Activated T-helper 1 cell treated with anti-CD3 and anti-CD28 coated beads, Interleukin-12 subunit alpha, Interleukin-12 subunit beta, Interleukin-2, Interleukin-4 antibody, amounts not matched to agents 30 ng/mL and 10 ng/mL and 1 ng/mL, durations not matched to agents 14 hours and 24 hours and 36 hours (primary cell): ENCODE measurements at regions of chr2 and their contacts with region 1.

Region 1: DNA sequence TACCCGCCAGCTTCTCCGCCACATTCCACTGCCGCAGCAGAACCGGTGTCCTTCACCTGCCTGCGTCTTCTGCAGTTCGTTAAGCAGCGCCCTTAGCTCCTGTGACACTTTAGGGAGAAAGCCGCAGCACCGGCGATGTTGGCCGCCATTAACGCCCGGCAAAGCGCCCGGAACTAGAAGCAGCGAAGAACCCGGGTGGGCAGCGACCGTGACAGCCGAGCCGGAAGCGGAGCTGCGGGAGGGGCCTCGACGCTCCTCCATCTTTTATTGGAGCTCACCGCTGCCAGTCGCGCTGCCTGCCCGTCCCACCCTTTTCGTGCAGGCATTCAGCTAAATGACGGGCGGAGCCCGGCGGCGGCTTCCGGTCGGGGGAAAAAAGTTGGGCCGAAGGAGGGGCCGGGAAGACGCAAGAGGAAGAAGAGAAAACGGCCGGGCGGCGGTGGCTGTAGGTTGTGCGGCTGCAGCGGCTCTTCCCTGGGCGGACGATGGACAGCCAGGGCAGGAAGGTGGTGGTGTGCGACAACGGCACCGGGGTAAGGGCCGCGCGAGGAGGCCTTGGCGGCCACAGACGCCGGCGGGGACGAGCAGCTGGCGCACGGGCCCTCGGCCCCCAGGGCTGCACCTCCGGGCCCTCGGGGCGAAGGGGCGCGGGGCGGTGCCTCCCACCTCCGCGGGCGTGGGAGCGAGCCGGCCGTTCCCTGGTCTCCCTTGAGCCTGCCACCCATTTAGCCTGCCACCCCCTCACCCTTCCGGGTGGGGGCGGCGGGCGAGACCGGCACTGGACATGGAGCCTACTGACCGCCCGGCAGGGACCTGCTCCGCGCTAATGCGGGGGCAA is at the start of gene ACTR2:
- DNase-seq: peak; percentile 95
- H3K4me3 Mint-ChIP-seq: peak within 1 kb of the TSS; percentile 98
- H3K27ac Mint-ChIP-seq: peak within 1 kb of the TSS; percentile 99
- H3K4me1 Mint-ChIP-seq: peaks cover 36% of the 10 kb centered on the region
- H3K27me3 Mint-ChIP-seq: no peaks in the 10 kb centered on the region
- total RNA-seq, gene ACTR2: 285 and 295 TPM in 2 replicates

Region 2: GRCh38 chr2:65129826-65130663 is 97.6 kb before region 1 on chr2 and contains the start of gene RAB1A:
- intact Hi-C with region 1: loop called (anchors 1 kb)
- DNase-seq: peak; percentile 98
- H3K4me3 Mint-ChIP-seq: peak within 1 kb of the TSS; percentile 98
- H3K27ac Mint-ChIP-seq: peak within 1 kb of the TSS; percentile 99
- H3K4me1 Mint-ChIP-seq: peaks cover 30% of the 10 kb centered on the region
- H3K27me3 Mint-ChIP-seq: peaks cover 16% of the 10 kb centered on the region
- total RNA-seq, gene RAB1A: 73.4 and 81.6 TPM in 2 replicates

Region 3: GRCh38 chr2:65215946-65216345 is 11.7 kb before region 1 on chr2:
- intact Hi-C with region 1: no loop called
- DNase-seq: no peak
- H3K4me3 Mint-ChIP-seq: no peak overlapping the region
- H3K27ac Mint-ChIP-seq: peak overlapping the region; percentile 15
- H3K4me1 Mint-ChIP-seq: no peaks in the 10 kb centered on the region
- H3K27me3 Mint-ChIP-seq: no peaks in the 10 kb centered on the region